Heart left ventricle (tissue), 16 donors: ENCODE measurements at regions of chr11 and their contacts with region 1.

Region 1: GRCh38 chr11:20926799-20927540 is 257.6 kb downstream of the NELL1 start:
- DNase-seq: no peak
- ATAC-seq: no peak
- H3K4me3 ChIP-seq: no peak overlapping the region
- H3K27ac ChIP-seq: no peak overlapping the region
- H3K4me1 ChIP-seq: no peaks in the 10 kb centered on the region
- H3K27me3 ChIP-seq: no peaks in the 10 kb centered on the region
- CTCF ChIP-seq: no peak
- POLR2A ChIP-seq: no peak

Region 2: GRCh38 chr11:20226933-20227332 is 700.0 kb before region 1 on chr11:
- intact Hi-C with region 1: no loop called
- DNase-seq: no peak
- ATAC-seq: no peak
- H3K4me3 ChIP-seq: no peak overlapping the region
- H3K27ac ChIP-seq: no peak overlapping the region
- H3K4me1 ChIP-seq: no peaks in the 10 kb centered on the region
- H3K27me3 ChIP-seq: peaks cover 0 to 6% (median 0%) of the 10 kb centered on the region in 9 donors
- CTCF ChIP-seq: no peak
- POLR2A ChIP-seq: no peak

Region 3: GRCh38 chr11:20530942-20531689 is 395.9 kb before region 1 on chr11:
- intact Hi-C with region 1: no loop called
- DNase-seq: no peak
- ATAC-seq: no peak
- H3K4me3 ChIP-seq: no peak overlapping the region
- H3K27ac ChIP-seq: no peak overlapping the region
- H3K4me1 ChIP-seq: no peaks in the 10 kb centered on the region
- H3K27me3 ChIP-seq: peaks cover 0 to 4% (median 0%) of the 10 kb centered on the region in 9 donors
- CTCF ChIP-seq: no peak
- POLR2A ChIP-seq: no peak

Region 4: DNA sequence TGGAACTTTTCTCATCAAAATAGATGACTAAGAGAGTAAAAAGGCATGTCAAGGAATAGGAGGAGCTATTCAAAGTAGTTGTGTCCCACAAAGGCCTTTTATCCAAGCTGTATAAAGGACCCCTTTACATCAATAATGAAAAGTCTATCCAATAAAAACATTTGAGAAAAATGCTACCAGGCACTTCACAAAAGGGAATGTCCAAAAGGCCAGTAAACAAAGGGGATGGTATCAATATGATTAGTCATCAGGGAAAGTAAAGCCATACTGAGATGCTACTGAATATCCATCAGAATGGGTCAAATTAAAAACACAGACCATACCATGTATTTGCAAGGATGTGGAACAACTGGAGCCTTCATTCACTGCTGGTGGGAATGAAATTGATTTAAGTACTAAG is 32.7 kb before region 1 on chr11:
- intact Hi-C with region 1: no loop called
- DNase-seq: no peak
- ATAC-seq: no peak
- H3K4me3 ChIP-seq: no peak overlapping the region
- H3K27ac ChIP-seq: no peak overlapping the region
- H3K4me1 ChIP-seq: no peaks in the 10 kb centered on the region
- H3K27me3 ChIP-seq: peaks cover 0 to 2% (median 0%) of the 10 kb centered on the region in 9 donors
- CTCF ChIP-seq: no peak
- POLR2A ChIP-seq: no peak

Region 5: DNA sequence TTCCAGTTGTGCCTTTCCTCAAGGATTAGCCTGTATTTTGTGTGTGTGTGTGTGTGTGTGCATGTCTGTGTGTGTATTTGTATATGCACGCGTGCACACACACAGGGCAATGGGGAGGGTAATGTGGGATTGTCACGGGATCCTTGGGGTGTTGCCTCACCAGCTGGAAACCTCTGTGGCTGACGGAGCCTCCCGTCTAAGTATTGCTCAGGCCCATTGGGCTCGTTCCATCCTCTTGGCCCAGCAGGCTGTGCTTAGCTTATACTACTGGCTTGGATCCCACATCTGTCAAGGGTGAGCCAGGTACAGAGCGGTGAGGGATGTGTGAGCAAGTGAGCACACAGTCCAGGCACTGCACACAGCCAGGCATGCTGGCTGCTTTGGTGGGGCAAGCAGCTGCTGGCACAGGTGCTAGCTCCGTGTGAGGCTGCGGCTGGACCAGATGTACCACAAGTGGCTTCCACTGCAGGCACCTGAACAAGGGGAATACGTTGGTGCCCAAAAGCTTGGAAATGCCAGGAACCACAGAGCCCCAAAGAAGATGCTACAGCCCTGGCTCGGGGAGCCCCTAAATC is 205.3 kb after region 1 on chr11:
- intact Hi-C with region 1: no loop called
- DNase-seq: no peak
- ATAC-seq: no peak
- H3K4me3 ChIP-seq: no peak overlapping the region
- H3K27ac ChIP-seq: no peak overlapping the region
- H3K4me1 ChIP-seq: no peaks in the 10 kb centered on the region
- H3K27me3 ChIP-seq: no peaks in the 10 kb centered on the region
- CTCF ChIP-seq: no peak
- POLR2A ChIP-seq: no peak

Region 6: GRCh38 chr11:21421711-21422329 is 494.9 kb after region 1 on chr11:
- intact Hi-C with region 1: loop called in 1 of 10 experiments (anchors 5 kb)
- DNase-seq: no peak
- ATAC-seq: no peak
- H3K4me3 ChIP-seq: no peak overlapping the region
- H3K27ac ChIP-seq: no peak overlapping the region
- H3K4me1 ChIP-seq: no peaks in the 10 kb centered on the region
- H3K27me3 ChIP-seq: no peaks in the 10 kb centered on the region
- CTCF ChIP-seq: no peak
- POLR2A ChIP-seq: no peak